Pancreas (tissue), 10 donors: ENCODE measurements at regions of chr12 and their contacts with region 1.

Region 1: GRCh38 chr12:48936379-48936979 is 11.2 kb upstream of the FKBP11 start:
- DNase-seq: peak; percentile 47 to 91 (median 72)
- ATAC-seq: peak; percentile 69 to 92 (median 88)
- H3K4me3 ChIP-seq: no peak overlapping the region
- H3K27ac ChIP-seq: no peak overlapping the region
- H3K4me1 ChIP-seq: no peaks in the 10 kb centered on the region
- H3K27me3 ChIP-seq: no peaks in the 10 kb centered on the region
- CTCF ChIP-seq: peak; percentile 85 to 90 (median 87)

Region 2: GRCh38 chr12:48613321-48613720 is 323.2 kb before region 1 on chr12:
- intact Hi-C with region 1: no loop called
- DNase-seq: no peak
- ATAC-seq: no peak
- H3K4me3 ChIP-seq: no peak overlapping the region
- H3K27ac ChIP-seq: no peak overlapping the region
- H3K4me1 ChIP-seq: no peaks in the 10 kb centered on the region
- H3K27me3 ChIP-seq: peaks cover 0 to 5% (median 0%) of the 10 kb centered on the region in 4 donors
- CTCF ChIP-seq: no peak

Region 3: DNA sequence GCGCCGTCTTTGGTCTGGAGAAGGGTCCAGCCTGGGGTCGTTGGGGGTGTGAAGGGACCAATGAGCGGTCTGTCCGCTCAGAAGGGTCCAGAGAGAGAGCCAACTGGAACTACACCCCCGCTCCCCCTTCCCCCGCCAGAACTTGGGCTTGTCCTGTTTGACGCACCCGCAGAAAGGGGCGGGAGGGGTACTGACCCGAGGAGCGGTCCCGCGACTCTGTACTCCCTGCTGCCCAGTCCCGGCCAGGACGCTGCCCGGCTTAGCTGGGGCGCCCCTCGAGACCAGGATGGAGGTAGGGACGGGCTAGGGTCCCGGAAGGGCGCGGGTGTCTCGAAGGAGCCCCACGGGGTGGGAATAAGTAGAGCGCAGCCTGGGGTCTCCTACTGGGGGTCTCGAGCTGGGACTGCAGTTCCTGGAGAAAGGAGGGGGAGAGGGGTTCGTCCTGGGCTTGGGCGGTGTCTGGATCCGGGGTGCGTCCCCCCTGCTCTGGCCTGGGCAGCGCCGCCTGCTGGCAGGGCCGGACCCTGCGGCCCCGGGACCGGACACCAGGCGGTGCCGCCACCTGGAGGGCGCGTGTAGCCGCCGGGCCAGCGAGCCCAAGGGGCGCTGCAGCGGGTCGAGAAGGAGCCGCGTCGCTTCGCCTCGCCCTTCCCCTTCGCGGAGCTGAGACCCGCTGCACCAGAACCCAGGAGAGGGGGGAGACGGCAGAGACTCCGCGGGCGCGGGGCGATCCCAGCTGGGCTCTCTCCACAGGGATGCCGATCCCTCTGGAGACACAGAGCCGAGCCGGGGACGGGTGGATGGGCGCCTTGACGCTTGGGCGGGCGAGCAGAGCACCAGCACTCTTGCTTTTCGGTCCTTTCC is 122.0 kb before region 1 on chr12:
- intact Hi-C with region 1: no loop called
- DNase-seq: peak; percentile 76 to 97 (median 88)
- ATAC-seq: peak; percentile 87 to 94 (median 90)
- H3K4me3 ChIP-seq: peak overlapping the region; percentile 63 to 89 (median 78)
- H3K27ac ChIP-seq: peak overlapping the region; percentile 70 to 84 (median 80)
- H3K4me1 ChIP-seq: peaks cover 0 to 8% (median 8%) of the 10 kb centered on the region in 3 donors
- H3K27me3 ChIP-seq: no peaks in the 10 kb centered on the region
- CTCF ChIP-seq: peak; percentile 95 to 99 (median 99)

Region 4: DNA sequence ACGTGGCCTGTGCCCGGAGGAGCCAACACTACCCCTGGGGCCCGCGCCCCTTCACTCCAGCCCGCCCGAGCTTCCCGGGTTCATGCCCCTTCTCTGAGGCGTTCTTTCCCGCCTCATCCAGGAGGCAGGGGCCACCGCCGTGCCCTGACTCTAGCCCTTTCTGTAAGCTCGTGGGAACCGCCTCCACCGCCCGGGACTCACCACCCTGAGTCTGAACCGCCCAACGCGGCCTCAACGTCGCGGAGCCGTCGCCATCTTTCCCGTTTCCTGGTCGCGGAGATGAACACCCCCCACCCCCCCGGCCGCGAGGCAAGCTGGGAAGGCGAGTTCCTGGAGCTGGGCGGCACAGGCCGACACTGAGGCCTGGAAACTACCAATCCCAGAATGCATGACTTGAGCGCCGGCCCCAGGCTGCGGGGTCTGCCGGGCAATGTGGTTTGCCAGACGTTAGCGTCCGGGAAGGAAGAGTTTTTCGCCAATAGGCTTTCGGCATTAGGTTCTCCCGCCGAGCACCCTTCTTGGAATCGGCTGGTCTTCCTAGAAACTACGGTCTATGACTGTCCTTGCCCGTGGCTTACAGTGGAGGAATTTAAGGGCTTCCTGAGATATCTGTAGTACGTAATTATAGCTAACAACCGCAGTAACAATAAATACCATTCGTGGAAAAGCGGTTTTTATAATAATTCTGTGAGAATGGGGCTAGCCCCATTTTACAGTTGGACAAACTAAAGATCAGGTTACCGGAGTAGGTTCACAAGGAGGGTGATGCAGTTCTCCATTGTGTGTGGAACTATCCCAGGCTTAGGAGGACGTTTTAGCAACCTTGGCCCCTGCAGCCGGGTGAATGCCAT is 84.4 kb before region 1 on chr12 and contains the start of gene DDX23:
- intact Hi-C with region 1: loop called in 2 of 3 experiments (anchors 5 kb)
- DNase-seq: peak; percentile 89 to 96 (median 94)
- ATAC-seq: peak; percentile 95 to 98 (median 97)
- H3K4me3 ChIP-seq: peak within 1 kb of the TSS; percentile 88 to 98 (median 92)
- H3K27ac ChIP-seq: peak within 1 kb of the TSS; percentile 56 to 82 (median 70)
- H3K4me1 ChIP-seq: peaks cover 10 to 15% (median 10%) of the 10 kb centered on the region in 3 donors
- H3K27me3 ChIP-seq: no peaks in the 10 kb centered on the region
- CTCF ChIP-seq: no peak
- total RNA-seq, gene DDX23: 25.9 to 49.3 (median 32.1) TPM

Region 5: GRCh38 chr12:48857278-48857994 is 79.0 kb before region 1 on chr12:
- intact Hi-C with region 1: loop called in 2 of 3 experiments (anchors 5 kb)
- DNase-seq: no peak
- ATAC-seq: no peak
- H3K4me3 ChIP-seq: no peak overlapping the region
- H3K27ac ChIP-seq: no peak overlapping the region
- H3K4me1 ChIP-seq: peaks cover 0 to 5% (median 0%) of the 10 kb centered on the region in 3 donors
- H3K27me3 ChIP-seq: no peaks in the 10 kb centered on the region
- CTCF ChIP-seq: no peak